ENCODE measurements at regions of chr2 and their contacts with region 1.

Region 1: GRCh38 chr2:159712143-159712928 is at the start of gene MARCHF7:
- DNase-seq: peak; percentile 79
- ATAC-seq: peak; percentile 92
- H3K4me3 ChIP-seq: peak within 1 kb of the TSS; percentile 99
- H3K27ac ChIP-seq: peak within 1 kb of the TSS; percentile 99
- H3K4me1 ChIP-seq: peaks cover 3% of the 10 kb centered on the region; the same call in 1 of the 2 replicates
- H3K27me3 ChIP-seq: no peaks in the 10 kb centered on the region
- CTCF ChIP-seq: peak; percentile 57 to 74 (median 63)
- EP300 ChIP-seq: 0 out of 4 replicates have a peak, but pooled peaks of 1 of the 2 experiments have one; percentile 11
- POLR2A ChIP-seq: peak; percentile 99
- RAD21 ChIP-seq: peak; percentile 63
- polyA plus RNA-seq, gene MARCHF7: 39.4 to 56.3 TPM

Region 2: GRCh38 chr2:159286709-159287441 is 425.5 kb before region 1 on chr2:
- CTCF ChIA-PET with region 1: interaction called, 4 read pairs
- POLR2A ChIA-PET with region 1: no interaction called
- RAD21 ChIA-PET with region 1: interaction called, 3 read pairs
- SMC1A ChIA-PET with region 1: no interaction called
- in situ Hi-C with region 1: no loop called
- intact Hi-C with region 1: loop called (anchors 2 kb)
- DNase-seq: peak; percentile 78
- ATAC-seq: peak; percentile 96
- H3K4me3 ChIP-seq: peak overlapping the region; percentile 86
- H3K27ac ChIP-seq: peak overlapping the region; percentile 75
- H3K4me1 ChIP-seq: peaks cover 11% of the 10 kb centered on the region
- H3K27me3 ChIP-seq: no peaks in the 10 kb centered on the region
- CTCF ChIP-seq: no peak
- EP300 ChIP-seq: no peak
- POLR2A ChIP-seq: peak; percentile 77
- RAD21 ChIP-seq: no peak

Region 3: DNA sequence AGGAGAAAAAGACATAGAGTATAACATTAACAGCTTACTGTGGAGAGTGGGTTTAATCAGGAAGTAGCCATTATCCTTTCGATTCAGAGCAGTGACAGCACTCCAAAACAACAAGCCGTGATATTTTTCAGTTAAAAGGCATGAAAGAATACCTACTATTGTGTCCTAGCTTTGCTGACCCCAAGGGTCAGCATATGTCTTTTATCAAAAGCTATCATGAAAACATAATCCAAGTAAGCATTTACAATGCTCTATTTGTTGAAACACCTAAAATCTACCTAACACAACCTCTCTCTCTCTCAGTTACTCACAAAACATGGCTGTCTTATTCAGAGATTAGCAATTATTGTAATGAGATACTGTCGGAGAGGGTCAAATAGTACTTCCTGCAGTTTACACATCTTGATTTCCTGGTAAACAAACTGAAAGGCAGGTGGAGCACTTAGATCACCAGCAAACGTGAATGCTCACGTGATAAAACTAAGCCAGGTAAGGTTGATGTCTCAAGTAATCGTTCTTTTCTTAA is 196.0 kb before region 1 on chr2:
- CTCF ChIA-PET with region 1: interaction called, 4 read pairs
- POLR2A ChIA-PET with region 1: interaction called, 6 read pairs
- RAD21 ChIA-PET with region 1: interaction called, 11 read pairs
- SMC1A ChIA-PET with region 1: no interaction called
- in situ Hi-C with region 1: no loop called
- intact Hi-C with region 1: loop called (anchors 2 kb)
- DNase-seq: peak; percentile 45
- ATAC-seq: peak; percentile 88
- H3K4me3 ChIP-seq: peak overlapping the region; percentile 49
- H3K27ac ChIP-seq: peak overlapping the region; percentile 86
- H3K4me1 ChIP-seq: no peaks in the 10 kb centered on the region; the same call in 1 of the 2 replicates
- H3K27me3 ChIP-seq: no peaks in the 10 kb centered on the region
- CTCF ChIP-seq: peak in 2 of 3 experiments; percentile 16 to 36; a peak in 3 of 6 replicates
- EP300 ChIP-seq: no peak
- POLR2A ChIP-seq: peak; percentile 40; the same call in 1 of the 2 replicates
- RAD21 ChIP-seq: peak; percentile 42; the same call in 1 of the 2 replicates

Region 4: GRCh38 chr2:159728629-159729028 is 16.3 kb after region 1 on chr2:
- CTCF ChIA-PET with region 1: interaction called, 7 read pairs
- POLR2A ChIA-PET with region 1: interaction called, 12 read pairs
- RAD21 ChIA-PET with region 1: interaction called, 5 read pairs
- SMC1A ChIA-PET with region 1: interaction called, 84 read pairs
- in situ Hi-C with region 1: no loop called
- intact Hi-C with region 1: no loop called
- DNase-seq: no peak
- ATAC-seq: no peak
- H3K4me3 ChIP-seq: no peak overlapping the region
- H3K27ac ChIP-seq: no peak overlapping the region
- H3K4me1 ChIP-seq: no peaks in the 10 kb centered on the region
- H3K27me3 ChIP-seq: no peaks in the 10 kb centered on the region
- CTCF ChIP-seq: no peak
- EP300 ChIP-seq: no peak
- POLR2A ChIP-seq: no peak
- RAD21 ChIP-seq: no peak

Region 5: DNA sequence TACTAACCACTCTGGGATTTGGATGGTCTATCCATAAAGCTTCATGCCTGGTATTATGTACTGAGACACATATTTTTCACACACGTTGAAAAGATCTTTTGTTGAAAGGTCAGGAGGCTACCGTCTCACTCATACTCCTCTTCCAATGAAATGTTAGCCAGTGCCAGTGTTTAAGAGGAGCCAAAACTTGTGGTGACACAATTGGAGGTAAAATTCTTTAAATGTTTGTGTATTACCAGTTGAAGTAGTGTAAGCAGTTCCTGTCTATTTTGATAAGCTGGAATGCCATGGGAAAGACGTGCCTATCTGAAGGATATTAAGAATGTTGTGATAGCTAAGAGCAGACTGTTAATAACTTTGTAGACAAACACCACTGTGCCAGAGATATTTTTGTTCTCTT is 32.0 kb after region 1 on chr2:
- CTCF ChIA-PET with region 1: interaction called, 10 read pairs
- POLR2A ChIA-PET with region 1: interaction called, 5 read pairs
- RAD21 ChIA-PET with region 1: interaction called, 3 read pairs
- SMC1A ChIA-PET with region 1: interaction called, 6 read pairs
- in situ Hi-C with region 1: no loop called
- intact Hi-C with region 1: no loop called
- DNase-seq: no peak
- ATAC-seq: no peak
- H3K4me3 ChIP-seq: no peak overlapping the region
- H3K27ac ChIP-seq: no peak overlapping the region
- H3K4me1 ChIP-seq: no peaks in the 10 kb centered on the region
- H3K27me3 ChIP-seq: no peaks in the 10 kb centered on the region
- CTCF ChIP-seq: no peak
- EP300 ChIP-seq: no peak
- POLR2A ChIP-seq: no peak
- RAD21 ChIP-seq: no peak

Region 6: GRCh38 chr2:159904127-159904958 is 192.0 kb after region 1 on chr2:
- CTCF ChIA-PET with region 1: interaction called, 4 read pairs
- POLR2A ChIA-PET with region 1: interaction called, 11 read pairs
- RAD21 ChIA-PET with region 1: interaction called, 4 read pairs
- SMC1A ChIA-PET with region 1: interaction called, 4 read pairs
- in situ Hi-C with region 1: no loop called
- intact Hi-C with region 1: no loop called
- DNase-seq: no peak
- ATAC-seq: peak; percentile 82
- H3K4me3 ChIP-seq: peak within 1 kb of the TSS; percentile 94
- H3K27ac ChIP-seq: peak within 1 kb of the TSS; percentile 83
- H3K4me1 ChIP-seq: peaks cover 25% of the 10 kb centered on the region
- H3K27me3 ChIP-seq: no peaks in the 10 kb centered on the region
- CTCF ChIP-seq: 0 out of 6 replicates have a peak, but pooled peaks of 1 of the 3 experiments have one; percentile 0
- EP300 ChIP-seq: no peak
- POLR2A ChIP-seq: peak; percentile 93
- RAD21 ChIP-seq: no peak

Region 7: GRCh38 chr2:160299540-160299939 is 587.2 kb after region 1 on chr2:
- CTCF ChIA-PET with region 1: no interaction called
- POLR2A ChIA-PET with region 1: no interaction called
- RAD21 ChIA-PET with region 1: no interaction called
- SMC1A ChIA-PET with region 1: no interaction called
- in situ Hi-C with region 1: no loop called
- intact Hi-C with region 1: no loop called
- DNase-seq: no peak
- ATAC-seq: no peak
- H3K4me3 ChIP-seq: no peak overlapping the region
- H3K27ac ChIP-seq: no peak overlapping the region
- H3K4me1 ChIP-seq: no peaks in the 10 kb centered on the region
- H3K27me3 ChIP-seq: no peaks in the 10 kb centered on the region; a peak in 1 of 4 replicates
- CTCF ChIP-seq: no peak
- EP300 ChIP-seq: no peak
- POLR2A ChIP-seq: no peak
- RAD21 ChIP-seq: no peak

Measured in GM12878 (cell line).